ENCODE measurements at regions of chr3 and their contacts with region 1.

Region 1: GRCh38 chr3:139427283-139427993 is 38.0 kb upstream of the COPB2 start:
- DNase-seq: peak in 2 of 4 donors; percentile 65 to 78
- ATAC-seq: peak; percentile 95
- H3K4me3 ChIP-seq: no peak overlapping the region
- H3K27ac ChIP-seq: no peak overlapping the region
- H3K4me1 ChIP-seq: no peaks in the 10 kb centered on the region
- H3K27me3 ChIP-seq: no peaks in the 10 kb centered on the region
- CTCF ChIP-seq: peak; percentile 76 to 81

Region 2: GRCh38 chr3:139541156-139541897 is 113.9 kb after region 1 on chr3:
- intact Hi-C with region 1: no loop called
- DNase-seq: no peak
- ATAC-seq: no peak
- H3K4me3 ChIP-seq: no peak overlapping the region
- H3K27ac ChIP-seq: no peak overlapping the region
- H3K4me1 ChIP-seq: peaks cover 0 to 15% of the 10 kb centered on the region in 2 donors
- H3K27me3 ChIP-seq: peaks cover 0 to 43% of the 10 kb centered on the region in 2 donors
- CTCF ChIP-seq: no peak

Region 3: GRCh38 chr3:139561959-139562676 is 134.7 kb after region 1 on chr3:
- intact Hi-C with region 1: loop called in 1 of 2 experiments (anchors 5 kb)
- DNase-seq: peak in 1 of 4 donors; percentile 42
- ATAC-seq: peak; percentile 84
- H3K4me3 ChIP-seq: no peak overlapping the region
- H3K27ac ChIP-seq: no peak overlapping the region
- H3K4me1 ChIP-seq: no peaks in the 10 kb centered on the region
- H3K27me3 ChIP-seq: no peaks in the 10 kb centered on the region
- CTCF ChIP-seq: peak; percentile 44 to 48

Measured in left lung (tissue), 14 donors.